ENCODE measurements at regions of chr14 and their contacts with region 1.

Region 1: GRCh38 chr14:34227834-34228649 is 234.0 kb downstream of the SPTSSA start:
- DNase-seq: peak; percentile 72
- ATAC-seq: peak; percentile 99
- H3K4me3 ChIP-seq: no peak overlapping the region
- H3K27ac ChIP-seq: no peak overlapping the region
- H3K4me1 ChIP-seq: peaks cover 8% of the 10 kb centered on the region; the same call in 1 of the 2 replicates
- H3K27me3 ChIP-seq: peaks cover 0 to 5% of the 10 kb centered on the region in 2 experiments; a peak in 1 of 5 replicates
- CTCF ChIP-seq: peak; percentile 98
- EP300 ChIP-seq: no peak
- POLR2A ChIP-seq: no peak
- RAD21 ChIP-seq: peak; percentile 97

Region 2: GRCh38 chr14:33792720-33793368 is 435.2 kb before region 1 on chr14:
- CTCF ChIA-PET with region 1: interaction called, 5 read pairs
- POLR2A ChIA-PET with region 1: no interaction called
- in situ Hi-C with region 1: no loop called
- intact Hi-C with region 1: loop called (anchors 1 kb)
- DNase-seq: peak; percentile 72
- ATAC-seq: peak; percentile 96
- H3K4me3 ChIP-seq: no peak overlapping the region
- H3K27ac ChIP-seq: no peak overlapping the region
- H3K4me1 ChIP-seq: 0 out of 2 replicates have a peak, but pooled peaks cover 4% of the 10 kb centered on the region
- H3K27me3 ChIP-seq: peaks cover 0 to 11% of the 10 kb centered on the region in 2 experiments; a peak in 2 of 5 replicates
- CTCF ChIP-seq: peak; percentile 97
- EP300 ChIP-seq: no peak
- POLR2A ChIP-seq: no peak
- RAD21 ChIP-seq: peak; percentile 94

Region 3: DNA sequence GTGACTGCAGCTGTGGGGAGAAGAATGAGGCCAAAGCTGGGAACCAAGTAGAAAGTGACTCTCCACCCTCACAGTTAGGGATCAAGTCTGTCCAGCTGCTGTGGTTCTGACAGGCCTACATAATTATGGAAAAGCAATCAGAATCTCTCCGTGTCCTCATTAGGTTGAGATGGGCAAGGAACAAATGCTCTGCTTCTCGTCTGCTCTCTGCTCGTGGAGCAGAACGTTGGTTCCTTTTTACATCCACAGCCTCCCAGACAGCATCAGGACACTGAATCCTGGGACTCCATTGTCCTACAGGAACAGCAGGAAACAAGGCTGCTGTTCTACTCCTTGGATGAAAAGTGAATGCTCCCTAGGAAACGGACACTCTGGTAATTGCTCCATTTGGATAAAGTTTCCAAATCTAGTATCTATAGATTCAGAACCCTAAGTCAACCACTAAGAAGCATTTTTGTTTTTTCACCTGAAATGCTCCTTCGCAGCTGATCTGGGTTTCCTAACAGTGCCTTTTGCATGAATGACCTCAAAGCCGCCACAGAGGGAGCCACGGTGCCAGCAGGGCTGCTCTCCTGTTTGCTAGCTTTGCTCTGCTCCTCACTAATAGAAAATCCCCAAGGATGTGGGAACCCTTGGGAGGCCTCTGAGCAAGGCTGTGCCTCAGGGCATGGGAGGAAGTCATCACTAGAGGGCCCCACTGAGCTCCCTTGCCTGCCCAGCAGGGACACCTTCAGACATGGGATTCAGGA is 379.2 kb before region 1 on chr14:
- CTCF ChIA-PET with region 1: interaction called, 34 read pairs
- POLR2A ChIA-PET with region 1: no interaction called
- in situ Hi-C with region 1: no loop called
- intact Hi-C with region 1: loop called (anchors 1 kb)
- DNase-seq: peak; percentile 81
- ATAC-seq: peak; percentile 97
- H3K4me3 ChIP-seq: no peak overlapping the region
- H3K27ac ChIP-seq: no peak overlapping the region
- H3K4me1 ChIP-seq: peaks cover 4% of the 10 kb centered on the region; the same call in 1 of the 2 replicates
- H3K27me3 ChIP-seq: peaks cover 0 to 5% of the 10 kb centered on the region in 2 experiments; a peak in 1 of 5 replicates
- CTCF ChIP-seq: peak; percentile 89
- EP300 ChIP-seq: no peak
- POLR2A ChIP-seq: no peak
- RAD21 ChIP-seq: peak; percentile 95

Region 4: GRCh38 chr14:34098045-34098984 is 129.7 kb before region 1 on chr14:
- CTCF ChIA-PET with region 1: interaction called, 11 read pairs
- POLR2A ChIA-PET with region 1: no interaction called
- in situ Hi-C with region 1: no loop called
- intact Hi-C with region 1: loop called (anchors 1 kb)
- DNase-seq: peak; percentile 68
- ATAC-seq: peak; percentile 66
- H3K4me3 ChIP-seq: 0 out of 6 replicates have a peak overlapping the region, but pooled peaks of 1 of the 3 experiments have one; percentile 0
- H3K27ac ChIP-seq: no peak overlapping the region
- H3K4me1 ChIP-seq: peaks cover 29% of the 10 kb centered on the region
- H3K27me3 ChIP-seq: peaks cover 0 to 33% of the 10 kb centered on the region in 2 experiments; a peak in 2 of 5 replicates
- CTCF ChIP-seq: peak; percentile 91
- EP300 ChIP-seq: no peak; a peak in 1 of 4 replicates
- POLR2A ChIP-seq: no peak
- RAD21 ChIP-seq: peak; percentile 95; the same call in 1 of the 2 replicates

Region 5: GRCh38 chr14:34243006-34243795 is 15.2 kb after region 1 on chr14:
- CTCF ChIA-PET with region 1: no interaction called
- POLR2A ChIA-PET with region 1: no interaction called
- in situ Hi-C with region 1: no loop called
- intact Hi-C with region 1: no loop called
- DNase-seq: no peak
- ATAC-seq: no peak
- H3K4me3 ChIP-seq: no peak overlapping the region
- H3K27ac ChIP-seq: no peak overlapping the region
- H3K4me1 ChIP-seq: no peaks in the 10 kb centered on the region
- H3K27me3 ChIP-seq: no peaks in the 10 kb centered on the region
- CTCF ChIP-seq: no peak
- EP300 ChIP-seq: no peak
- POLR2A ChIP-seq: no peak
- RAD21 ChIP-seq: no peak

Region 6: GRCh38 chr14:34322940-34323418 is 94.9 kb after region 1 on chr14:
- CTCF ChIA-PET with region 1: no interaction called
- POLR2A ChIA-PET with region 1: no interaction called
- in situ Hi-C with region 1: no loop called
- intact Hi-C with region 1: loop called (anchors 1 kb)
- DNase-seq: peak; percentile 87
- ATAC-seq: peak; percentile 87
- H3K4me3 ChIP-seq: no peak overlapping the region
- H3K27ac ChIP-seq: no peak overlapping the region
- H3K4me1 ChIP-seq: 0 out of 2 replicates have a peak, but pooled peaks cover 6% of the 10 kb centered on the region
- H3K27me3 ChIP-seq: no peaks in the 10 kb centered on the region
- CTCF ChIP-seq: peak; percentile 89
- EP300 ChIP-seq: no peak
- POLR2A ChIP-seq: no peak
- RAD21 ChIP-seq: peak; percentile 41; the same call in 1 of the 2 replicates

Region 7: GRCh38 chr14:34582117-34582680 is 354.2 kb after region 1 on chr14:
- CTCF ChIA-PET with region 1: no interaction called
- POLR2A ChIA-PET with region 1: no interaction called
- in situ Hi-C with region 1: no loop called
- intact Hi-C with region 1: no loop called
- DNase-seq: no peak
- ATAC-seq: no peak
- H3K4me3 ChIP-seq: no peak overlapping the region
- H3K27ac ChIP-seq: no peak overlapping the region
- H3K4me1 ChIP-seq: no peaks in the 10 kb centered on the region
- H3K27me3 ChIP-seq: no peaks in the 10 kb centered on the region
- CTCF ChIP-seq: no peak
- EP300 ChIP-seq: no peak
- POLR2A ChIP-seq: no peak
- RAD21 ChIP-seq: no peak